ENCODE measurements at regions of chr12 and their contacts with region 1.

Region 1: DNA sequence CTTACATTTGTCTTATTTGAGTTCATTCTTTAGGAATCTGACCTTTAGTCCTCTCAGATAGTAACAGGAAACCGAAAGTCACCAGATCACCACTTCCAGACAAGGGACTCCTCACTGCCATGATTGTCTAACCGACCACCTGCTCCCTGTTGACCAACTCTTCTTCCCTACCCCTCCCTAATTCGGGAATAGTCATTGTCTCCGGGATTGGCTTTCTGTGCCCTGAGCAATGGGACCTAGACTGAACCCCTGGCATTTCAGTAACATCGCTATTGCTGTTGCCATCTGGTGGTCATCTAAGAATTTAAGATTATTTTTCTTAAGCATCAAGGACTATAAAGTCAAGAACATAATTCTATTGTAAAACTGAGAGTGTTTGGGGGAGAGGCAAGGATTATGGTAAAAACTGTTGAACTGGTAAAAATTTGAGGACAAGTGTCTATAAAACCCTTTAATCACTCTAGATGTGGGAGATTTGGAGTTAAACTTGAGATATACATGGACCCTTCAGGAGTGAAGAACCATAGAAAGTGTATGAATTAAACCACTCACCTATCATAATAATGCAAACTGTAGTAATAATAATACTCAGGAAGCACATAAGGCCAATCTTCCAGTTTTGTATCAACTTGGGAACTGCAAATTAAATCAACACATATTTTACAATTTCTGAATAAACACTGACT is 6.3 kb downstream of the CLEC2A start:
- DNase-seq: peak; percentile 21
- H3K4me3 ChIP-seq: no peak overlapping the region
- H3K27ac ChIP-seq: no peak overlapping the region
- H3K4me1 ChIP-seq: no peaks in the 10 kb centered on the region
- H3K27me3 ChIP-seq: no peaks in the 10 kb centered on the region
- CTCF ChIP-seq: peak; percentile 15 to 58

Region 2: DNA sequence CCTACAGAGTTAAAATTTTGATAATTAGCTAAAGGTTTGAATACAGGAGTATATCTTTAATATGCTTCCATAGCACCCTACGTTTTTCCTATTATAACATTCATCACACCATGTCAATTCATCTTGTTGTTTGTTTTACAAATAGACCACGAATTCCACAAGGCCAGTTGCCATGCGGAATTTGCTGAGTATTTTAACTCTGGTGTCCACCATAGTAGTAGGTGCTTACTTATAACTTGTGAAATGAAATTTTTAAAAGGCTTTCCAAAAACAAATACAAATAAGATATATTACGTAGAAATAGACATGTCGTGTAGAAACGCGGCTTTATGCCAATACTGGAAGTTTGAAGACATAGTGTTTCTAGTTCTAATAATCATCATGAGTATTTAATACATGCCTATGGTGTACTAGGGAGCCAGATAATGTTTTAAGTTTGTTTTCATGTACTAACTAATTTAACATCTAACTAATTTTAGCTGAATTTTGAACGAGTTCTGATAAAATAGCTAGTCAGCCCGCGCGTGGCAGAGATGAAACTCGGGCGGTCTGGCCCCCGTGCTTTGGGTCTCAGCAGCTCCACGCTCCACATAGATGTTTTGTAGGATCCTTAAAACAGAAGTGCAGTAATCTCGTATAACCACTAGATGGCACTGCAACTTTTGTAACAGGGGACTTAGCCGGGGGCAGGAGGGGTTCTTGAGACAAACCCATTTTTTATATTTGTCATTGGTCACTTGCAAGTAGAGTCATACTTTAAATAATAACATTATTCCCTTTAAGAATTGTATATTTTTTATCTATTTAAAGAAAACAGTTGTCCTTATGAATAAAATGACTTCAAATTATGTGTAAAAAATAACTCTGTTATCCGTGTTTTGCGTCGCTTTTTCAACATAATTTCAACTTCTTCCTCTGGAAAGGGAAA is 175.3 kb before region 1 on chr12:
- CTCF ChIA-PET with region 1: no interaction called
- dilution Hi-C with region 1: no loop called
- in situ Hi-C with region 1: no loop called
- intact Hi-C with region 1: loop called (anchors 2 kb)
- DNase-seq: peak; percentile 30
- H3K4me3 ChIP-seq: no peak overlapping the region
- H3K27ac ChIP-seq: no peak overlapping the region
- H3K4me1 ChIP-seq: no peaks in the 10 kb centered on the region
- H3K27me3 ChIP-seq: no peaks in the 10 kb centered on the region
- CTCF ChIP-seq: peak; percentile 75 to 82

Region 3: DNA sequence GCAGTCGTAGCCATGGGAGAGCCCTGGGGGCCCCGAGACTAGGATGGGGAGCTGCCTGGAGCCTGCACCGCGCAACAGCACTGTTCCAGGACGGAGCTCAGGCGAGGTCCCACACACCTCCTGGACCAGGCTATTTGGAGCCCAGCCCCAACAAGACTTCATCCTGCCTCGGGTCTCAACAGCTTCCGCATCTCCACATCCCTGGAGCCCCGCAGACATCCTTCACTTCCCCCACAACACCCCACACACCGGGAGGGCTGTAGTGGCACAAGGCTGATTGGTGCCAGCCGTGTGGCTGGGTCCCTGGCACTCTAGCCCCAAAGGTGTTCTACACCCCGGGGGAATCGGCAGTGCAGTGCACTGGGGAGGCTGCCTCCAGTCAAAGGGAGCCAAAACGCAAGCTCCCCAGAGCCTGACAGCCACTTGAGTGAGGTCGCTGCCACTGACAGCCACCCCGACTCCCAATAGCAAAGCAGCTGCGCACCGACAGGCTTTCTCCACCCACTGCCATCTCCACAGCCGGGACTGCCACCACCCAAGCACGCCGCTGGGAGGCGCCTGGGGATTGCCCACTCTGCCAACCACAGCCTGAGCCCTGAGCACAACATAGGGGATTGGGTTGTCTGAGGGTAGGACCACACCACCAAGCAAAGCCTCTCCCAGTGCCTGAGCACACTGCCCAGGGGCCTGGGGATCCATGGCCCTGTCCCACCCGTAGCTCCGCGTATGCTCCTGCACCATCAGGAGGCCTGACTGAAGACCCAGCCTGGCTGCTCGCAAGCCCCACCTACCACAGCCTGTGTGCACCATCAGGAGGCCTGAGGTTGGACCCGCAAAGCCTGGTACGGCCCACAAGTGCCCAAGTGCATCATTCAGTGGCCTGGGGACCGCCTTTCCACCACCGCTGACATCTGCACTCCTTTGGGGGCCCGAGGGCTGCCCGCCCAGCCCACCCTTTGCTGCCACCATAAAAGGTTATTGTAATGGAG is 111.7 kb before region 1 on chr12:
- CTCF ChIA-PET with region 1: no interaction called
- dilution Hi-C with region 1: no loop called
- in situ Hi-C with region 1: loop called (anchors 5 kb)
- intact Hi-C with region 1: loop called (anchors 1 kb)
- DNase-seq: peak; percentile 55
- H3K4me3 ChIP-seq: peak overlapping the region; percentile 20 to 42 (median 39)
- H3K27ac ChIP-seq: no peak overlapping the region
- H3K4me1 ChIP-seq: peaks cover 5% of the 10 kb centered on the region
- H3K27me3 ChIP-seq: no peaks in the 10 kb centered on the region
- CTCF ChIP-seq: peak; percentile 92 to 99

Measured in mammary epithelial cell (primary cell).